ENCODE measurements at regions of chr6 and their contacts with region 1.

Region 1: DNA sequence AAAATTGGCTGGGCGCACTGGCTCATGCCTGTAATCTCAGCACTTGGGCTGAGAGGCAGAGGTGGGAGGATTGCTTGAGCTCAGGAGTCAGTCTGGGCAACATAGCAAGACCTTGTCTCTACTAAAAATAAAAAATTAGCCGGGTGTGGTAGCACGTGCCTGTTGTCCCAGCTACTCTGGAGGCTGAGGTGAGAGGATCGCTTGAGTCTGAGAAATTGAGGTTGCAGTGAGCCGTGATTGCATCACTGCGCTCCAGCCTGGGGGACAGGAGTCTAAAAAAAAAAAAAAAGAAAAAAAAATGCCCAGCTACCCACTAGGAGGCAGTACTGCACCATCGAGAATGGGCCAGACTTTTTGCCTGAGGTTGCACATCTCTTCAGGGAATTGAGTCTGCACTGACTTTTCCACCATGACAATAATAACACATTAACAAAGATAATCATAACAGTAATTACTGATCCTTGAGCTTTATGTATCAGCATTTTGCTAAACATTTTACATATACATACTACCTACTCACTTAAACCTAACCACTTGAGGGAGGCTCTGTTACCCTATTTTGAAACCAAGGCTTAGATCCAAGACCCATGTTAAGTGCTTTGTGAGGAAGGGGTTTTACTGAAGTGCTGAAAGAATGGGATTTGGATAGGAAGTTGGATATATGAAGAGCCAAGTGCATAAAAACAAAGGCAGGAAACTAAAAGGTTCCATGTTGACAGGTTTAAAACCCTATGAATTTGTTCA is 21.0 kb downstream of the SRSF3 start:
- H3K4me3 ChIP-seq: no peak overlapping the region
- H3K27ac ChIP-seq: no peak overlapping the region
- H3K4me1 ChIP-seq: no peaks in the 10 kb centered on the region
- CTCF ChIP-seq: peak; percentile 83

Region 2: GRCh38 chr6:36463676-36464075 is 151.5 kb before region 1 on chr6:
- CTCF ChIA-PET with region 1: no interaction called
- POLR2A ChIA-PET with region 1: no interaction called
- H3K4me3 ChIP-seq: no peak overlapping the region
- H3K27ac ChIP-seq: no peak overlapping the region
- H3K4me1 ChIP-seq: peaks cover 6% of the 10 kb centered on the region; the same call in 1 of the 2 replicates
- CTCF ChIP-seq: no peak

Region 3: GRCh38 chr6:36504181-36504580 is 111.0 kb before region 1 on chr6:
- CTCF ChIA-PET with region 1: no interaction called
- POLR2A ChIA-PET with region 1: no interaction called
- H3K4me3 ChIP-seq: no peak overlapping the region
- H3K27ac ChIP-seq: no peak overlapping the region
- H3K4me1 ChIP-seq: no peaks in the 10 kb centered on the region
- CTCF ChIP-seq: no peak

Region 4: GRCh38 chr6:36594029-36594815 is 21.0 kb before region 1 on chr6 and contains the start of gene SRSF3:
- CTCF ChIA-PET with region 1: interaction called, 8 read pairs
- POLR2A ChIA-PET with region 1: interaction called, 25 read pairs
- H3K4me3 ChIP-seq: peak within 1 kb of the TSS; percentile 90
- H3K27ac ChIP-seq: peak within 1 kb of the TSS; percentile 89
- H3K4me1 ChIP-seq: peaks cover 10% of the 10 kb centered on the region; the same call in 1 of the 2 replicates
- CTCF ChIP-seq: peak; percentile 95

Region 5: GRCh38 chr6:36703982-36704381 is 88.8 kb after region 1 on chr6:
- CTCF ChIA-PET with region 1: interaction called, 10 read pairs
- POLR2A ChIA-PET with region 1: no interaction called
- H3K4me3 ChIP-seq: no peak overlapping the region
- H3K27ac ChIP-seq: no peak overlapping the region
- H3K4me1 ChIP-seq: no peaks in the 10 kb centered on the region
- CTCF ChIP-seq: no peak

Region 6: GRCh38 chr6:36735110-36736071 is 120.2 kb after region 1 on chr6:
- CTCF ChIA-PET with region 1: interaction called, 17 read pairs
- POLR2A ChIA-PET with region 1: no interaction called
- H3K4me3 ChIP-seq: no peak overlapping the region
- H3K27ac ChIP-seq: no peak overlapping the region
- H3K4me1 ChIP-seq: no peaks in the 10 kb centered on the region
- CTCF ChIP-seq: no peak

Region 7: DNA sequence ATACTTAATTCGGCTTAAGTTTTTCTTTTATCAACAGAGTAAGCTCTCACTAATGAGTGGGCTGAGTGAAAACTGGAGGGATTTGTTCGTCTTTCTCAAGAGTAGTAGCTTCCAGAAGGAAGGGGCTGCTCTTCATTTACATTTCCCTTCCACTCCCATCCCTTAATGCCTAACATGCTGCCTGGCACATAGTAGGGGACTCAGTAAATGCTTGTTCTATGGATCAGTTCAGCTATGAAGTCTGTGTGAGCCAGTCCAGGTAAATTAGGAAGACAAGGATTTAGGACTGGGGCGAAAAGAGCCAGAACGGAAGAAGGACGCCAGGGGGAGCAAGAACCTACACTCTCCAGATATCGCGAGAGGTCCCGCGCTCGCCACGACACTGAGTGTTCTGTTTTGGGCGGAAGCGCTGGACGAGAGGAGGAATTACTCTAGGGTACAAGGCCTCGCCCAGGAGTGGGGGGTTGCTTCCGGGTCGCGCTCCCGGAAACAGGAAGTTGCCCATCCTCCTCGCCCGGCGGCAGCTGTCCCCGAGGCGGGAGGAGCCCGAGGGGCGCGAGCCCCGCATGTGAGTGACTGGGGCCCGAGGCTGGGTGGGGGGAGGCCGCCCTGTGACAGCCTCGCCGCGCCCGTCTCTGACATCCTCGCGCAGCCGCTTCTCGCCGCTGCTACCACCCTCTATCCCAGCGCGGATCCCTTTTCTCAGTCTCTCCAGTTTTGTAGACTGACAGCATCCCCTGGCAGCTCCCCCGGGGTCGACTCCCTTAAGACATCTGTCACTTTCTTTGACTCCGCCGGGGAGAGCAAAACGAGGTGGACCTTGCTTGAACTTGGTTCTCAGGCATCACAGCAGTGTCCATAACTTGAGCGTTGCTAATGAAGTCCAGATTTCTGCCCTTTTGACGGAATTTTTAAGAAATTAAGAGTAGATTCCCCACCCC is 270.5 kb after region 1 on chr6 and contains the start of gene C6orf89:
- CTCF ChIA-PET with region 1: interaction called, 11 read pairs
- POLR2A ChIA-PET with region 1: no interaction called
- H3K4me3 ChIP-seq: peak within 1 kb of the TSS; percentile 81
- H3K27ac ChIP-seq: peak within 1 kb of the TSS; percentile 66
- H3K4me1 ChIP-seq: peaks cover 3% of the 10 kb centered on the region; the same call in 1 of the 2 replicates
- CTCF ChIP-seq: peak; percentile 92

Region 8: DNA sequence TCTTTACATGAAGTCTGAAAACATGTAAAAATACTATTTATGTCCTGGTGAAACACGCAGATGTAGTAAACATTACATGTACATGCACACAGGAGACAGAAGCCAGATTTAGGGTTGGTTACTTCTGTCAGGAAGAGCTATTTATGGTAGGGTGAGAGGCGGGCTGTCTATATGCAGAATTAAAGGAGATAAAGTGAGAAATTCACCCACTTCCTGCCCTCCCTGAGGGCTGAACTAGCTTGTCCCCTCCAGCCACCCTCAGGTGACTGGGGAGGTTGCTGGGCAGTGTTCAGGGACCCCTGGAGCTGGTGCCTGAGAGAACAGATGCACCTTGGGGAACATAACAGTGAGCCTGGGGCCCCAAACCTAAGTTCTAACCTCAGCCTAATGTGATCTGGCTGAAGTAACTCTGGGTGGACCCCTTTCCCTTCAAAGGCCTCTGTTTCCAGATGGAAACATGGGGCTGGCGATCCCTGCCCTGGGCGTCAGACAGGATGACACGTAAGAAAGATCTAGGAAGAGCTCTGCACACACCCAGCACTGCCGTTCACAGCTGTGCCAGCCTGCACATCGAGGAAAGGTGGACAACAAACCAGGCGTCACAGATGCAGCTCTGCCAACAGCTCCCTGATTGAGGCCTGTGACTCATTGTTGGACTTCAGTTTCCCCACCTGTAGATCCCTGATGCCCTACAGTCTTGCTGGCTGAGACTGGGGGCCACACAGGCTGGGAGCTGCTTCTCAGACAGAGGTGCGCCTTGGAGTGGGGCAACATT is 340.7 kb after region 1 on chr6:
- CTCF ChIA-PET with region 1: no interaction called
- POLR2A ChIA-PET with region 1: no interaction called
- H3K4me3 ChIP-seq: no peak overlapping the region
- H3K27ac ChIP-seq: no peak overlapping the region
- H3K4me1 ChIP-seq: no peaks in the 10 kb centered on the region
- CTCF ChIP-seq: no peak